ENCODE measurements at regions of chr14 and their contacts with region 1.

Region 1: GRCh38 chr14:100375963-100376735 is 53.0 kb downstream of the SLC25A47 start:
- DNase-seq: peak; percentile 95
- H3K4me3 Mint-ChIP-seq: peak within 1 kb of the TSS; percentile 81
- H3K27ac Mint-ChIP-seq: peak within 1 kb of the TSS; percentile 99
- H3K4me1 Mint-ChIP-seq: peaks cover 33% of the 10 kb centered on the region
- H3K27me3 Mint-ChIP-seq: no peaks in the 10 kb centered on the region
- CTCF ChIP-seq: no peak

Region 2: GRCh38 chr14:100256339-100256895 is 119.7 kb before region 1 on chr14:
- CTCF ChIA-PET with region 1: no interaction called
- intact Hi-C with region 1: no loop called
- DNase-seq: no peak
- H3K4me3 Mint-ChIP-seq: no peak overlapping the region
- H3K27ac Mint-ChIP-seq: no peak overlapping the region
- H3K4me1 Mint-ChIP-seq: peaks cover 36% of the 10 kb centered on the region
- H3K27me3 Mint-ChIP-seq: no peaks in the 10 kb centered on the region
- CTCF ChIP-seq: no peak

Region 3: DNA sequence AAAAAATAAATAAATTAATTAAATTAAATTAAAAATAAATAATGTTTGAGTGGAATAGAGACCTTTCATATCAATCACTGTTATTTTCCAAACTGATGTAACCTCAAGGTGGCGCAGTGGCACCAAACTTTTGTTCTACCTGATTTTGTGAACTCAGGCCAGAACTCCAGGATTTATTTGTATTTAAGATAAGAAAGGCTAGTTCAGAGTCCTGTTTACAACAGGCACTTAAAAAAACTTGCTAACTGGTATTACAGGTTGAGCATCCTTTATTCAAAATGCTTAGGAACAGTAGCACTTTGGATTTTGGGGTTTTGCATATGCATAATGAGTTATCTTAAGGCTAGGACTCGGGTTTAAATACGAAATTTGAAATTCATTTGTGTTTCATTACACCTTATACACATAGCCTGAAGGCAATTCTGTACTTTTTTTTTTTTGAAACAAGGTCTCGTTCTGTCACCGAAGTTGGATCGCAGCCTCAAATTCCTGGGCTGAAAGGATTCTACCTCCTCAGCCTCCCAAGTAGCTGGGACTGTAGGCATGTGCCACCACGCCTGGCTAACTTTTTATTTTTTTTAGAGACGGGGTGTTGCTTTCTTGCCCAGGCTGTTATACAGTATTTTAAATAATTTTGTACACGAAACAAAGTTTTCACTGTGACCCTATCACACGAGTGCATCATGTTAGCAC is 104.8 kb before region 1 on chr14:
- CTCF ChIA-PET with region 1: no interaction called
- intact Hi-C with region 1: loop called (anchors 10 kb)
- DNase-seq: peak; percentile 56
- H3K4me3 Mint-ChIP-seq: no peak overlapping the region
- H3K27ac Mint-ChIP-seq: no peak overlapping the region
- H3K4me1 Mint-ChIP-seq: peaks cover 5% of the 10 kb centered on the region
- H3K27me3 Mint-ChIP-seq: no peaks in the 10 kb centered on the region
- CTCF ChIP-seq: peak; percentile 12

Region 4: DNA sequence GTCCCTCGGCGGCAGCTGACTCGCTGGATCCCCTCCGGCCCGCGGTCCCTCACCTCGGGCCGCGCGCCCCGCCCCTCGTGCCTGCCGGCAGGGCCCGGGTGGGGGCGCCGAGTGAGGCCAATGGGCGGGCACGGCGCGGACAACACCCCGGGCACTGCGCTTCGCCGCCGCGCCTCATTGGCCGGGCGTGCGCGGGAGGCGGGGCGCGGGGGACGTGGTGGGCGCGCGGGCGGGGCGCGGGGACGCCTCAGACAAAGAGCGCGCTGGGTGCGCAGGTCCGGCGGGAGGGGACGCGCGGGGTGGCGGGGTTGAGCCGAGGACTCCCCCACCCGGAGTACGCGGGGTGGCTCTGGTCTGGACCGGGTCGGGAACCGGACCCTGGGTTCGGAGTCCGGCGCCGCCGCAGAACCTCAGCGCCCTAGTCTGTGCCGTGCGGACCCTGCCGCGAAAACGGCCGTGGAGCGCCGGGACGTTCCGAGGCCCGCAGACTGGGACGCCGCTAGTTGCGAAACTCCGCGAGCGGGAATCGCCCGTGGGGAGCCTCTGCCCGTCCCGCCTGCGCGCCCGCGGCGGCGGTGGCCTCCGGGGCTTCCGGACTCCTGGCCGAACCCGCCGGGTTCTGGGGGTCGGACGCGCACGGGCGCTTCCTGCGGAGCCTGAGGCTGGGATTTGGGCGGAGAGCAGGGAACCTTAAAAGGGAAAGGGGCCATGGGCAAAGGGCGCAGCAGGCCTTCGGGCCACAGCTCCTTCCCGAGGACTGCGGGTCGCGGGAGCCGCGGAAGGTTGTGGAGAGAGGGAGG is 69.5 kb before region 1 on chr14 and contains the start of gene SLC25A29:
- CTCF ChIA-PET with region 1: interaction called, 4 read pairs
- intact Hi-C with region 1: loop called (anchors 10 kb)
- DNase-seq: peak; percentile 91
- H3K4me3 Mint-ChIP-seq: peak within 1 kb of the TSS; percentile 80
- H3K27ac Mint-ChIP-seq: peak within 1 kb of the TSS; percentile 68
- H3K4me1 Mint-ChIP-seq: peaks cover 32% of the 10 kb centered on the region
- H3K27me3 Mint-ChIP-seq: peaks cover 7% of the 10 kb centered on the region
- CTCF ChIP-seq: no peak
- total RNA-seq, gene SLC25A29: 68.4 and 80.1 TPM in 2 replicates

Region 5: GRCh38 chr14:100944052-100944451 is 567.9 kb after region 1 on chr14:
- CTCF ChIA-PET with region 1: no interaction called
- intact Hi-C with region 1: no loop called
- DNase-seq: no peak
- H3K4me3 Mint-ChIP-seq: no peak overlapping the region
- H3K27ac Mint-ChIP-seq: no peak overlapping the region
- H3K4me1 Mint-ChIP-seq: no peaks in the 10 kb centered on the region
- H3K27me3 Mint-ChIP-seq: no peaks in the 10 kb centered on the region
- CTCF ChIP-seq: no peak